Transverse colon (tissue), 4 donors: ENCODE measurements at regions of chr19 and their contacts with region 1.

Region 1: GRCh38 chr19:3984908-3985642 is at the start of gene EEF2:
- DNase-seq: peak; percentile 92
- H3K4me3 ChIP-seq: peak within 1 kb of the TSS; percentile 74 to 82 (median 81)
- H3K27ac ChIP-seq: peak within 1 kb of the TSS; percentile 91 to 94 (median 94)
- H3K4me1 ChIP-seq: peaks cover 22 to 45% (median 37%) of the 10 kb centered on the region in 4 donors
- H3K27me3 ChIP-seq: no peaks in the 10 kb centered on the region
- CTCF ChIP-seq: peak in 1 of 5 experiments; percentile 30
- EP300 ChIP-seq: no peak
- POLR2A ChIP-seq: peak; percentile 100
- total RNA-seq, gene EEF2: 1,013 to 1,686 (median 1,532) TPM

Region 2: GRCh38 chr19:3923912-3924311 is 61.2 kb before region 1 on chr19:
- in situ Hi-C with region 1: no loop called
- intact Hi-C with region 1: no loop called
- DNase-seq: no peak
- H3K4me3 ChIP-seq: no peak overlapping the region
- H3K27ac ChIP-seq: no peak overlapping the region
- H3K4me1 ChIP-seq: no peaks in the 10 kb centered on the region
- H3K27me3 ChIP-seq: no peaks in the 10 kb centered on the region
- CTCF ChIP-seq: no peak
- EP300 ChIP-seq: no peak
- POLR2A ChIP-seq: no peak

Region 3: DNA sequence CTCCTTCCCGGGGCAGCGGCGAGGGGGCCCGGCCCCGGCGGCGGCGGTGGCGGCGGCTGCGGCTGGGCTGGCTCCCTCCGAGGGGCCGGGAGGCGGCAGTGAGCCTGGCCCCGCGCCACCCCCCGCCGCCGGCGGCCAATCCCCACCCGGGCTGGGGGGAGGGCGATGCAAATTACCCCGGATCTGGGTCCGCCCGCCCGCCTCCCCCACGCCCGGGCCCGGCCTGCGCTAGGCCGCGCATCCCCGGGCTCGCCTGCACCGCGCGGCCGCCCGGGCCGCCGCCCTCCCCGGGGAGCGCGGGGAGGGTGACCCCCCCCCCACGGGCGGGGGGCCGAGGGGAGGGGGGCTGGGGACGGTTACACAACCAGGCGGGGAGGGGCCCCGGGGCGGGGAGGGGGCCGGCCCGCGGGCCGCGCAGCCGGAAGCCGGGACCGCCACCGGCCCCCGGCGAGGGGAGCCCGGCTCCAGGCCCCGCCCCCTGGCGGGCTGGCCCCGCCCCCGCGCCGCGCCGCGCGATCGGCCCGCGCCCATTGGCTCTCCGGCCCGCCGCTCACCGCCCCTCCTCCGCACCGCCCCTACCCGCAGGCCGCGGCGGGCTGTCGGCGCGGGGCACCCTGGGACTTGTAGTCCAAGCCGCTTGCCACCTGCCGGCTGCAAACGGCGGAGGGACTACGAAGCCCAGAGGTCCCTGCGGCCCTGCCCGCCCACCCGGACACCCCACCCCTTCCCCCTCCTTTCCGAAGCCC is 80.5 kb after region 1 on chr19:
- in situ Hi-C with region 1: no loop called
- intact Hi-C with region 1: loop called (anchors 5 kb)
- DNase-seq: peak; percentile 98
- H3K4me3 ChIP-seq: peak overlapping the region in 3 of 4 donors; percentile 98 to 100 (median 99)
- H3K27ac ChIP-seq: peak overlapping the region; percentile 98 to 100 (median 100)
- H3K4me1 ChIP-seq: peaks cover 35 to 54% (median 47%) of the 10 kb centered on the region in 4 donors
- H3K27me3 ChIP-seq: no peaks in the 10 kb centered on the region
- CTCF ChIP-seq: no peak
- EP300 ChIP-seq: no peak
- POLR2A ChIP-seq: no peak

Region 4: GRCh38 chr19:4139614-4140236 is 154.7 kb after region 1 on chr19:
- in situ Hi-C with region 1: loop called in 1 of 4 experiments (anchors 25 kb)
- intact Hi-C with region 1: no loop called
- DNase-seq: peak; percentile 94
- H3K4me3 ChIP-seq: peak overlapping the region in 1 of 4 donors; percentile 6
- H3K27ac ChIP-seq: peak overlapping the region; percentile 54 to 69 (median 62)
- H3K4me1 ChIP-seq: peaks cover 0 to 44% (median 26%) of the 10 kb centered on the region in 4 donors
- H3K27me3 ChIP-seq: no peaks in the 10 kb centered on the region
- CTCF ChIP-seq: peak; percentile 76 to 92 (median 87)
- EP300 ChIP-seq: no peak
- POLR2A ChIP-seq: no peak

Region 5: DNA sequence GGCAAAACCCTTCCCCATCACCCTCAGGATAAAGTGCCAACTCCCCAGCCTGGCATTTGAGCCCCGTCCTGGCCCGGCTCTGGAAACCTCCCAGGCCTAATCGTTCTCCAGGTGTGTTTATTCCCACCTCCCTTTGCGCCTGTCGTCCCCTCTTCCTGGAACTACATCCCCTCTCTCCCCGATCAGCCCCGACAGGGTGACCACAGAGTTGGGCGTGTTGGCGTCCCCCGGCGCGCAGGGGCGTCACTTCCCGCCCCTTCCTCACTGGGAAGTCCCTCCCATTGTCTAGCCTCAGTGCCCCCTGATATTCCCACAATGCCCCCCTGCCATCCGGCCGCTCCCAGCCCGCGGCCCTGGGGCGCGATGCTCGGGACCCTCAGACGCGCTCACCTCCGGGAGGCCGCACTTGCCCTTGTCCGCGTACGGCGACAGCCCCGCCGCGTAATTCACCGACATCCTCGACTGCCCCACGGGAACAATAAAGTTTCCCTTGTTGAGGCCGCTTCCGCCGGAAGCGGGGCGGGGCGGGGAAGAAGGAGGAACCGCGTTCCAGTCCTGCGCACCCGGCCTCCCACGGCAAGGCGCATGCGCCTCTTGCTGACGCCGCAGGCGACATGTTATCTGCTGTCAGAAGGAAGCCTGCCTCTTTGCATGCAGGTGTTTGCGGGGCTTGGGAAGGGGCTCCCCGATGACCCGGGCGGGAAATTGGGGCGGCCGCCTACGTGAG is 197.2 kb after region 1 on chr19 and contains the starts of genes ANKRD24 and SIRT6:
- in situ Hi-C with region 1: loop called in 2 of 4 experiments (anchors 10 kb)
- intact Hi-C with region 1: no loop called
- DNase-seq: peak; percentile 98
- H3K4me3 ChIP-seq: peak within 1 kb of the TSS; percentile 76 to 96 (median 84)
- H3K27ac ChIP-seq: peak within 1 kb of the TSS; percentile 86 to 95 (median 88)
- H3K4me1 ChIP-seq: peaks cover 12 to 26% (median 22%) of the 10 kb centered on the region in 4 donors
- H3K27me3 ChIP-seq: no peaks in the 10 kb centered on the region
- CTCF ChIP-seq: no peak
- EP300 ChIP-seq: no peak
- POLR2A ChIP-seq: peak; percentile 88
- total RNA-seq, gene ANKRD24: 1.2 to 6.4 (median 2.1) TPM
- total RNA-seq, gene SIRT6: 141 to 215 (median 194) TPM